CD4-positive, alpha-beta T cell (primary cell): ENCODE measurements at regions of chr14 and their contacts with region 1.

Region 1: DNA sequence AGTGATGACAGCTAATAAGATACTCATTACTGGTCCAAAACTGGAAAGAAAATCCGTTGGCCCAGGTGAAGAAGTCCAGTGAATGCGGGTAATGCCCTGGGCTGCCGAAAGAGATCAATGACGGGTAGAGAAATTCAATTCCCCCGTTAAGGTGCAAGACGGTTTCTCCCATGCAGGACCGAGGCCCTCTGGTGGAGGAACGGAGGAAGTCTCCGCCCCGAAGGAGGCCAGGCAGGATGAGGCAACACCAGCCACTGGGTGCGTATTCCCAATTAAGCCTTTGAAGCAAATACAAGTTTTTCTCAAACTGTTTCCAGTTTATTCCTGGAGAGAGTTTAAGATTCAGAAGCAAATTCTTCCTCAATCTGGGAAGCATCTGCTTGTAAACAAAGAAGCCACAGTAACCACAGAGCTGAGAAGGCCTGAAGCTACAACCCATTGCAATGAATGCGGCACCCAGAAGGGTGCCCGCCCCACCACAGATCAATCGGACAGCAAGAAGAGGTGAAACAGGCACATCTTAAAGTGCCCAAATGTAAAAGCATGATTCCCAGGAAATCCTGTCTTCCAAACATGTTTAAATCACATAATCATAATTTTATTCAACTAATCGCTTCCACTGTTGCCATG is 118.5 kb downstream of the TTC7B start:
- DNase-seq: peak; percentile 61 to 82 (median 71)
- ATAC-seq: peak; percentile 97
- H3K4me3 ChIP-seq: no peak overlapping the region
- H3K4me3 Mint-ChIP-seq: no peak overlapping the region
- H3K27ac ChIP-seq: no peak overlapping the region
- H3K27ac Mint-ChIP-seq: no peak overlapping the region
- H3K4me1 ChIP-seq: peaks cover 6% of the 10 kb centered on the region
- H3K4me1 Mint-ChIP-seq: no peaks in the 10 kb centered on the region
- H3K27me3 ChIP-seq: no peaks in the 10 kb centered on the region
- H3K27me3 Mint-ChIP-seq: no peaks in the 10 kb centered on the region
- CTCF ChIP-seq: peak; percentile 94

Region 2: DNA sequence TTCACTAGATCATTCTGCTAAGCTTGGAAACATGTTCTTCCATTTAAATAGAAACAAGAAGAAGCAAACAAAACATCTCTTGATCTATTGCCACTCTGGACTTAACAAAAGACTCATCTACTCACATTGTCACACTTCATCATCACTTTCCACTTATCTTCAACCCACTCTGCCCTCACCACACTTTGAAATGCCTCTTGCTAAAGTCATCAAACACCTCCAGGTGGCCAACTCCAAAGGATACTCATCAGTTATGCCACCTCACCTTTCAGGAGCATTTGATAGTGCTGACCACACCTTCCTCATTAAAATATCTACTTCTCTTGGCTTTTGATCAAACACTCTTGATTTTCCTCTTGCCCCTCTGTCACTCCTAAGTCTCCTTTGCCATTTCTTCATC is 750.3 kb before region 1 on chr14:
- CTCF ChIA-PET with region 1: no interaction called
- POLR2A ChIA-PET with region 1: no interaction called
- intact Hi-C with region 1: loop called in 1 of 2 experiments (anchors 10 kb)
- DNase-seq: no peak
- ATAC-seq: no peak
- H3K4me3 ChIP-seq: no peak overlapping the region
- H3K4me3 Mint-ChIP-seq: no peak overlapping the region
- H3K27ac ChIP-seq: no peak overlapping the region
- H3K27ac Mint-ChIP-seq: no peak overlapping the region
- H3K4me1 ChIP-seq: no peaks in the 10 kb centered on the region
- H3K4me1 Mint-ChIP-seq: no peaks in the 10 kb centered on the region
- H3K27me3 ChIP-seq: no peaks in the 10 kb centered on the region
- H3K27me3 Mint-ChIP-seq: no peaks in the 10 kb centered on the region
- CTCF ChIP-seq: no peak